ENCODE measurements at regions of chr5 and their contacts with region 1.

Region 1: GRCh38 chr5:167763772-167764171 is 527.7 kb upstream of the WWC1 start:
- DNase-seq: no peak
- H3K4me3 ChIP-seq: no peak overlapping the region
- CTCF ChIP-seq: no peak

Region 2: GRCh38 chr5:167709625-167710024 is 54.1 kb before region 1 on chr5:
- in situ Hi-C with region 1: loop called (anchors 5 kb)
- DNase-seq: no peak
- H3K4me3 ChIP-seq: no peak overlapping the region
- CTCF ChIP-seq: no peak

Region 3: GRCh38 chr5:167720676-167721260 is 43.0 kb before region 1 on chr5:
- in situ Hi-C with region 1: no loop called
- DNase-seq: no peak
- H3K4me3 ChIP-seq: no peak overlapping the region
- CTCF ChIP-seq: no peak

Region 4: DNA sequence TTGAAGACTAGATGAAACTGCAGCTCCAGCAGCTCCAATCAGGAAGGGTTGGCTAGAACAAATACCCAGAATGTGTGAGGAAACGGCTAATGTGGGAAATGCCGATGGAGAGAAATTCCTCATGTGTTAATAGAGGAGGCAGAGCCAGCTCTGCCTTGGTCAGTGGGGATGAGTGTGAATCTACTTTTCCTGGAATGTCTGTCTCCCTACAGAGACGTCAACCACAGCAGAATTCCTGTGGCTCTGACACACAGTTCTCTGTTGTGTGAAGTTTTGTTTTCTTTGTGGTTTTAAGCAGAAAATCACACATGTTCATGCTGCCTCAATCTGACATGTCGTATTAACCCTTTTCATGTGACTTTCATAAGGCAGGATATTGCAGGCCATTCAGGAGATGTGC is 51.1 kb after region 1 on chr5:
- in situ Hi-C with region 1: loop called (anchors 5 kb)
- DNase-seq: peak; percentile 99
- H3K4me3 ChIP-seq: no peak overlapping the region
- CTCF ChIP-seq: no peak

Measured in astrocyte of the cerebellum (primary cell).